ENCODE measurements at regions of chr9 and their contacts with region 1.

Region 1: DNA sequence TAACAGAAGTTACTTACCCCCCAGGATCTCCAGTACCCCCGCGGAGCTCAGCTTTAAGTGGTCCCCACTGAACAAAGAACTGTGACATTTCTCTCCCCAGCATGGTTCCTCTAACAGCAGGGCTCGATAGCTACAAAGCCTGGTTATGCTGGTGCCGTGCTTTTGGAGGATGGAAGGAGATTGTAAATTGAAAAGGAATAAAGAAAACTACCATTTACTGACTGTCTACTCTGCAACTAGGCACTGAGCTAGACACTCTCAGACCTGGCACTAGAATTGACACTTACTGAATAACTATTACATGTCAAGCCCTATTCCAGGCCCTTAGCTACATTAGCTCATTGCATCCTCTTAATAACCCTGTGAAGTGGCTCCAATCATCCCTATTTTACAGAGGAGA is 145.3 kb downstream of the TTLL11 start:
- DNase-seq: no peak
- ATAC-seq: no peak
- H3K4me3 ChIP-seq: no peak overlapping the region
- H3K27ac ChIP-seq: no peak overlapping the region
- H3K4me1 ChIP-seq: no peaks in the 10 kb centered on the region
- H3K27me3 ChIP-seq: no peaks in the 10 kb centered on the region
- CTCF ChIP-seq: no peak

Region 2: DNA sequence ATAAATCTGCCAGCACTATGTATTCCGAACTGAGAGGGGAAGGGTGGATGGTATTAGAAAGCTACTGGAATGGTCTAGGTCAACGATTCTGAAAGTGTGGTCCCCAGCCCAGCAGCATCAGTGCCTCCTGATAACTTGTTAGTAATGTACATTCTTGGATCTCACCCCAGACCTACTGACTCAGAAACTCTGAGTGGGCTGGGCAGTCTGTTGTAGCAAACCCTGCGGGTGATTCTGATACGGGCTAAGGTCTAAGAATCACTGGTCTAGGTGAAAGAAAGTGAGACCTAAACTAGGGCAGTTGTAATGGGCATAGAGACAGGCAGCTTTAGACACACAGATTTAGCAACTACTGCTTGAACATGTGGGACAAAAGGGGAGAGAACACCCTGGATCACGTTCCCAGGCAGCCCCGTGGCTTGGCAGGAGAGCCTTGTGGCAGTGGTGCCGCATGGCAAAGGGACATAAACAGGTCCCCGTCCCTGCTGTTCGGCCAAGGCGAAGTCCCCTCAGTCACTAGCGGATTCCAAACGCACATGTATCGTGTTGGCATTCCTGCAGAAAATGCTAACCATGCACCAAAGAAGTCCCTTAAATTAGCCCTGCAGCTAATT is 71.0 kb before region 1 on chr9:
- intact Hi-C with region 1: no loop called
- DNase-seq: peak; percentile 63 to 80
- ATAC-seq: peak; percentile 80 to 94 (median 86)
- H3K4me3 ChIP-seq: no peak overlapping the region
- H3K27ac ChIP-seq: peak overlapping the region; percentile 65
- H3K4me1 ChIP-seq: peaks cover 15% of the 10 kb centered on the region
- H3K27me3 ChIP-seq: no peaks in the 10 kb centered on the region
- CTCF ChIP-seq: no peak

Region 3: GRCh38 chr9:121917375-121918335 is 30.1 kb before region 1 on chr9:
- intact Hi-C with region 1: loop called in 1 of 2 experiments (anchors 2 kb)
- DNase-seq: no peak
- ATAC-seq: no peak
- H3K4me3 ChIP-seq: no peak overlapping the region
- H3K27ac ChIP-seq: no peak overlapping the region
- H3K4me1 ChIP-seq: peaks cover 13% of the 10 kb centered on the region
- H3K27me3 ChIP-seq: no peaks in the 10 kb centered on the region
- CTCF ChIP-seq: no peak